ENCODE measurements at regions of chr2 and their contacts with region 1.

Region 1: DNA sequence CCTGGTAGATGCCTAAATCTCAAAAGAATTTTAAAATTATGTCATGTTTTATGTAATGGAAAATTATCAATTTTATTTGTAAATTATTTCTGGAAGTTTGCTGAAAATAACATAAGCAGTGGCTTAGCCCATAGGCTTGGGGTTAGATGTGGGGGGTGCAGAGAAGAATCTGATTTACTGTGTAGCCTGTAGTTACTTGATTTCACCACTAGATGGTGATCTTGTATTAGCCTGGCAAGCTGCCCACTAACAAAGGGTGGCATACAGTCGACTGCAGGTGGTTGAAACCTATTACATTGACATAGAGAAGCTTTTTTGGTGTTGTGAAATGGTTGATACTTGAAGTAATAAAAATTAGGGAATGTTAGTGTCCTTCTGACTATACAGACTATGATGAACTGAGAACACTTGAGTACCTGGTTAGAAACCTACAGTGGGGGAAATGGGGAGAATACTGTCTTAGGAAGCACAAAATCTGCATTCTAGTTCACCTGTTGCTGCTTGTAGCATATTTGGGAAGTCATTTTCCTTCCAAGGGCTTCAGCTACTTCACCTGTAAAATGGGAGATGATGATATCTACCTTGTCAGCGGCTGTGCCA is 191.0 kb upstream of the LHCGR start:
- DNase-seq: peak; percentile 47
- H3K4me3 Mint-ChIP-seq: no peak overlapping the region
- H3K27ac Mint-ChIP-seq: no peak overlapping the region
- H3K4me1 Mint-ChIP-seq: no peaks in the 10 kb centered on the region
- H3K27me3 Mint-ChIP-seq: peaks cover 15% of the 10 kb centered on the region
- CTCF ChIP-seq: peak; percentile 80

Region 2: GRCh38 chr2:48279344-48280090 is 667.0 kb before region 1 on chr2:
- CTCF ChIA-PET with region 1: no interaction called
- intact Hi-C with region 1: no loop called
- DNase-seq: no peak
- H3K4me3 Mint-ChIP-seq: no peak overlapping the region
- H3K27ac Mint-ChIP-seq: no peak overlapping the region
- H3K4me1 Mint-ChIP-seq: no peaks in the 10 kb centered on the region
- H3K27me3 Mint-ChIP-seq: no peaks in the 10 kb centered on the region
- CTCF ChIP-seq: no peak

Region 3: GRCh38 chr2:48343571-48344440 is 602.7 kb before region 1 on chr2:
- CTCF ChIA-PET with region 1: no interaction called
- intact Hi-C with region 1: no loop called
- DNase-seq: no peak
- H3K4me3 Mint-ChIP-seq: peak overlapping the region; percentile 66
- H3K27ac Mint-ChIP-seq: peak overlapping the region; percentile 78
- H3K4me1 Mint-ChIP-seq: peaks cover 21% of the 10 kb centered on the region
- H3K27me3 Mint-ChIP-seq: no peaks in the 10 kb centered on the region
- CTCF ChIP-seq: no peak

Region 4: GRCh38 chr2:49616800-49617199 is 670.3 kb after region 1 on chr2:
- CTCF ChIA-PET with region 1: no interaction called
- intact Hi-C with region 1: loop called (anchors 5 kb)
- DNase-seq: peak; percentile 4
- H3K4me3 Mint-ChIP-seq: no peak overlapping the region
- H3K27ac Mint-ChIP-seq: no peak overlapping the region
- H3K4me1 Mint-ChIP-seq: no peaks in the 10 kb centered on the region
- H3K27me3 Mint-ChIP-seq: peaks cover 7% of the 10 kb centered on the region
- CTCF ChIP-seq: no peak

Region 5: DNA sequence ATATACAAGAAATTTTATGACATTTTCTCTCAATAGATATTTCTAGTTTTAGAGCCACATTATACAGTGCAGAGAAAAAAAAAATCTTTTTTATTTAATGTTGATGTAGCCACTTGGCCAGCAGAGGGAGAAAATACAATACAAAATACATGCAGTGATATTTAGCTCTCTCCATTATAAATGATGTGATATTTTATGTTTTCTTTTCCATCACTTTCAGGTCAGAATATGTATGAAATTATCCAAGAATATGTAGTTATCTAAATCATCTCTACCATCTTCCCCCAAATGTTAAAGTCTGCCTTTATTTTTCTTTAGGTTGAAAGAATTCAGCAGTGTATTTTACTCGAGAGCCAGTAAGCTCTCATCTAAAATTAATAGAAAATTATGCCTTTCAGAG is 741.4 kb after region 1 on chr2:
- CTCF ChIA-PET with region 1: no interaction called
- intact Hi-C with region 1: loop called (anchors 10 kb)
- DNase-seq: no peak
- H3K4me3 Mint-ChIP-seq: no peak overlapping the region
- H3K27ac Mint-ChIP-seq: no peak overlapping the region
- H3K4me1 Mint-ChIP-seq: no peaks in the 10 kb centered on the region
- H3K27me3 Mint-ChIP-seq: no peaks in the 10 kb centered on the region
- CTCF ChIP-seq: no peak

Region 6: DNA sequence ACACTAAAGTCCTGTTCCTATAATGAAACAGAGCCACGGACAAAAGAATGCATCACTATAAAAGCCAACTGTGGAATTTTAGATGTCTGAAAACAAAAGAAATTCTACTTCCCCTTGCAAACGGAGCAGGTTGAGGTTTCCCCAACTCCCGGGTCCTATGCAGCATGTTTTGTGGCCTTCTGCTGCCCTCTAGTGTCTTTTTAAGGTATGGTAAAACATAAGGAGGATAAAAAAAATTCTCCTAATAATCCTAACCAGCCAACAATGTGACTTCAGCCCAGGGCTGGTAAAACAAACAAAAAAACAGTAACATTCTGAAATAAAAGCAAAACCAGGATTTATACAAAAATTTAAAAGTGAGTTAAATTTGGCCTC is 1545.9 kb after region 1 on chr2:
- CTCF ChIA-PET with region 1: interaction called, 4 read pairs
- intact Hi-C with region 1: loop called (anchors 5 kb)
- DNase-seq: peak; percentile 35
- H3K4me3 Mint-ChIP-seq: no peak overlapping the region
- H3K27ac Mint-ChIP-seq: no peak overlapping the region
- H3K4me1 Mint-ChIP-seq: no peaks in the 10 kb centered on the region
- H3K27me3 Mint-ChIP-seq: peaks cover 50% of the 10 kb centered on the region
- CTCF ChIP-seq: peak; percentile 31